PC-3 (cell line): ENCODE measurements at regions of chr3 and their contacts with region 1.

Region 1: DNA sequence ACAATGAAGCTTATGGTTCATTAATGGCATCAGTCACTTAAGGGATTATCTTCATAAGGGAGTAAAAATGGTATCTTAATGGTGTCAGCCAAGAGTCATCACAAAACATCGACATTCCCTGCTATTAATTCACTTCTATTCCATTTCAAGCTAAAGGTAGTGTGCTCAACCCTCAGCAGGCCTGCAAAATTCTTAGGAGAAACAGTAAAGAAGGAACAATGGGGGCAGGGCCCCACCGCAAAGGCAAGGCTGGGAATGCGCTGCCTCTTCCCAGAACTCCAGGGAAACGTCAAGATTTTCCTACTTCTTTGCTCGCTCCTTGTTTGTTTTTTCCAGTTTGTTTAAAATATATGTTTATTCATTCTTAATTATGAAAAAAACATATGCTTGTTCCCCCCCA is 187.3 kb upstream of the TSC22D2 start:
- DNase-seq: no peak
- ATAC-seq: peak; percentile 22; the same call in 1 of the 2 replicates
- H3K4me3 ChIP-seq: peak overlapping the region; percentile 44; the same call in 1 of the 2 replicates
- H3K27ac ChIP-seq: no peak overlapping the region
- H3K4me1 ChIP-seq: 0 out of 2 replicates have a peak, but pooled peaks cover 3% of the 10 kb centered on the region
- H3K27me3 ChIP-seq: no peaks in the 10 kb centered on the region
- CTCF ChIP-seq: no peak

Region 2: DNA sequence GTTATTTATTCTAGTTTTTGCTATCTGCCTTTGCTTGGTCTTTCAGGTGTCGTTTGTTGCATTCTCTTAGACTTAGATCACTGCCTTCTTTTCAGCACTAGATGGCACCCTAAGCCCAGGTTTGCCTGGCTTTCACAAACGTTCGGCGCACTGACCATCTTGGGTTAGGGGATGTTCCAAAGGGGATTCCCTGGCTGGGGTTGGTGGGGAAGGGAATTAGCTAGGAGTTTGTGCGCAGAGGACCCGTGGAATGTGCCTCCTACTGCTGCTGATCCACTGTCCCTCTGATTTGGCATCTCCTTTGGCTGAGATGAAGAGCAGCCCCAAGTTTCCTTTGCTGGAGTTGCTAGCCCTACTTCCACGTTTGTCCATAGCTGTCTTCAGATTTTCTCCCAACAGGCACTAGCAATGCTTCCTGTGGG is 284.0 kb before region 1 on chr3:
- CTCF ChIA-PET with region 1: interaction called, 3 read pairs
- POLR2A ChIA-PET with region 1: no interaction called
- intact Hi-C with region 1: loop called (anchors 1 kb)
- DNase-seq: peak; percentile 77
- ATAC-seq: peak; percentile 93
- H3K4me3 ChIP-seq: peak overlapping the region; percentile 37; the same call in 1 of the 2 replicates
- H3K27ac ChIP-seq: no peak overlapping the region
- H3K4me1 ChIP-seq: peaks cover 5% of the 10 kb centered on the region; the same call in 1 of the 2 replicates
- H3K27me3 ChIP-seq: no peaks in the 10 kb centered on the region
- CTCF ChIP-seq: peak; percentile 95

Region 3: GRCh38 chr3:150248116-150248887 is 27.5 kb after region 1 on chr3:
- CTCF ChIA-PET with region 1: no interaction called
- POLR2A ChIA-PET with region 1: interaction called, 24 read pairs
- intact Hi-C with region 1: no loop called
- DNase-seq: peak; percentile 60
- ATAC-seq: no peak
- H3K4me3 ChIP-seq: no peak overlapping the region
- H3K27ac ChIP-seq: 0 out of 2 replicates have a peak overlapping the region, but pooled peaks have one; percentile 7
- H3K4me1 ChIP-seq: peaks cover 38% of the 10 kb centered on the region
- H3K27me3 ChIP-seq: no peaks in the 10 kb centered on the region
- CTCF ChIP-seq: no peak